WTC11 (cell line): ENCODE measurements at regions of chr5 and their contacts with region 1.

Region 1: GRCh38 chr5:176405656-176406427 is 10.5 kb downstream of the CLTB start:
- DNase-seq: peak; percentile 54
- ATAC-seq: peak; percentile 89
- H3K4me3 Mint-ChIP-seq: no peak overlapping the region
- H3K27ac Mint-ChIP-seq: peak overlapping the region; percentile 75
- H3K4me1 Mint-ChIP-seq: peaks cover 3% of the 10 kb centered on the region
- H3K27me3 Mint-ChIP-seq: no peaks in the 10 kb centered on the region
- CTCF ChIP-seq: no peak

Region 2: GRCh38 chr5:176319827-176320554 is 85.9 kb before region 1 on chr5:
- CTCF ChIA-PET with region 1: no interaction called
- POLR2A ChIA-PET with region 1: no interaction called
- DNase-seq: no peak
- ATAC-seq: no peak
- H3K4me3 Mint-ChIP-seq: no peak overlapping the region
- H3K27ac Mint-ChIP-seq: no peak overlapping the region
- H3K4me1 Mint-ChIP-seq: no peaks in the 10 kb centered on the region
- H3K27me3 Mint-ChIP-seq: no peaks in the 10 kb centered on the region
- CTCF ChIP-seq: no peak

Region 3: GRCh38 chr5:176388444-176389134 is 17.3 kb before region 1 on chr5 and contains the starts of genes HIGD2A and NOP16:
- CTCF ChIA-PET with region 1: interaction called, 22 read pairs
- POLR2A ChIA-PET with region 1: no interaction called
- DNase-seq: peak; percentile 99
- ATAC-seq: peak; percentile 92
- H3K4me3 Mint-ChIP-seq: peak within 1 kb of the TSS; percentile 99
- H3K27ac Mint-ChIP-seq: peak within 1 kb of the TSS; percentile 100
- H3K4me1 Mint-ChIP-seq: peaks cover 19% of the 10 kb centered on the region
- H3K27me3 Mint-ChIP-seq: no peaks in the 10 kb centered on the region; the same call in 1 of the 2 replicates
- CTCF ChIP-seq: no peak
- total RNA-seq, gene HIGD2A: 98.2 to 112 TPM (median 108 TPM) in 3 replicates
- total RNA-seq, gene NOP16: 51.7 to 57.7 TPM (median 52.1 TPM) in 3 replicates

Region 4: DNA sequence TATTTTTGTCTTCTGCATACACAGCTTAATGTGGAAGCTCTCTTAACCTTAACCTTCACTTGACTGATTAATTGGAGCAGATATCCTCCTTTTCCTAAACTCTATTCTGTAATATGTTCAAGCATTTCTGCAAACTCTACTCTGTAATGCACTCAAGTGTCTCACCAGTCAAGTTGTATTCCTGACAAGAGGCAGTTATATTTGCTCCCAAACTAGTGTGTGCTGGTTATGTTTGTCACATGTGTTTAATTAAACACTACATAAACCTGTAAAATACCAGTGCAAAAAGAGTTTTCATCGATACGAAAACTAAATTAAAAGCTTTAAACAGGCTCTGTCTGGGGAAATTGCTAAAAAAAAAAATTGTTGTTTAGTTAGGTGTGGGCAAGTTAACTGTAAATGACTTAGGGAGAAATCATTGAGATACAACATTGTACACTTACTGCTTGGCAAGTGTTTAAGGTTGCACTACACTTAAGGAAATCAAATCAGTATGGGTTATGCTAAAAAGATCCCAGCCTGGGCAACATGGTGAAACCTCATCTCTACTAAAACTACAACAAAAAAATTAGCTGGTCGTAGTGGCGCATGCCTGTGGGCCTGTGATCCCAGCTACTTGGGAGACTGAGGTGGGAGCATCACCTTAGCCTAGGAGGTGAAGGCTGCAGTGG is 49.0 kb after region 1 on chr5:
- CTCF ChIA-PET with region 1: no interaction called
- POLR2A ChIA-PET with region 1: no interaction called
- DNase-seq: no peak
- ATAC-seq: no peak
- H3K4me3 Mint-ChIP-seq: no peak overlapping the region
- H3K27ac Mint-ChIP-seq: peak overlapping the region; percentile 78
- H3K4me1 Mint-ChIP-seq: 0 out of 2 replicates have a peak, but pooled peaks cover 3% of the 10 kb centered on the region
- H3K27me3 Mint-ChIP-seq: no peaks in the 10 kb centered on the region
- CTCF ChIP-seq: no peak